GM12878 (cell line): ENCODE measurements at regions of chr9 and their contacts with region 1.

Region 1: DNA sequence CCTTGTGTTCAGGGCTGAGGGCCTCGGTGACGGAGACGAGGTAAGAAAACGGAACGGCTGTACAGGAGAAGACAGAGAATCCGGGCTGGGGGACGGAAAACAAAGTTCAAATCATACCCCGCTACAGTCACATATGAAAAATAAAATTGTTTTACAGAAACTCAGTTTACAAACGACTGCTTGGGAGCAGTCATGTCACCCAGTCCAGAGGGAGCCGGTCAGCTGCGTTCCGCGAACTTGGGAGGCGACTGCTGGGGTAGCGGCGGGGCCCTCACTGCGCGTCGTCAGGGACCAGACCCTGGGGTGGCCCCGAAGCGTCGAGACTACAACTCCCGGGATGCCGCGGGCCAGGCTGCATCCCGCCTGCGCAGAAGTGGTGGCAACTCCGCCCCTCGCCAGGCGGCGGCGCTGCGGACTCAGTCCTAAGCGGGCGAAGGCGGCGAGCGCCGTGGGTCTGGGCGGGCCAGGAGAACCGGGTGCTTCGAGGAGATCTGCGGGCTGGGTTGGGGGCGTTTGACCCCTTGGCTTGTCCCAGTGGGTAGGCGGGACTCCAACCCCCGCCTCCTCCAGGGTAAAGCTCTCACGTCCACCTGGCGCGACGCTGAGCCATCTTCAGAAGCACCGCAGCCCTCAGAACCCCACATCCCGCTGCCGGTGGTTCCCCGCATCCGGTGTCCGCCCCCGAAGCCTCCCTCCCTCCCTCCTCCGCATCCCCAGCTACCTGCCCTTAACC is 4.0 kb downstream of the SIT1 start:
- DNase-seq: no peak
- ATAC-seq: peak; percentile 90
- H3K4me3 ChIP-seq: peak overlapping the region; percentile 96
- H3K27ac ChIP-seq: peak overlapping the region; percentile 89
- H3K4me1 ChIP-seq: peaks cover 27% of the 10 kb centered on the region
- H3K27me3 ChIP-seq: no peaks in the 10 kb centered on the region
- CTCF ChIP-seq: peak; percentile 98
- EP300 ChIP-seq: no peak
- POLR2A ChIP-seq: peak; percentile 74
- RAD21 ChIP-seq: peak; percentile 79

Region 2: DNA sequence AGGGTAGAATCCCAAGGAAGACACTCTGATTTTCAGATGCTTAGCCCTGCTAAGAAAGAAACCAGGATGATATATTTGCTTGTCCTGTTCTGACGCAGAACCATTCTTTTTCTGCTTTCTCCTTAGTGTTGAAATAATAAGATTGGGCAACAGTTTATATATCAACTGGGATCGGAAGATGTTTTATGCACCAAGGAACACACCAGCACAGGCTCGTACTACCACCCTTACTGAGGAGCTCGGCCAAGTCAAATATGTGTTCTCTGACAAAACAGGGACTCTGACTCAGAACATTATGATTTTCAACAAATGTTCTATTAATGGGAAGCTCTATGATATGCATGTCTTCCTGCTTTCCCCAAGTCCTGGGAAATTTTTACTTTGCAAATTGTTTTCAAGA is 175.8 kb before region 1 on chr9:
- CTCF ChIA-PET with region 1: no interaction called
- POLR2A ChIA-PET with region 1: no interaction called
- RAD21 ChIA-PET with region 1: no interaction called
- SMC1A ChIA-PET with region 1: no interaction called
- in situ Hi-C with region 1: no loop called
- intact Hi-C with region 1: no loop called
- DNase-seq: no peak
- ATAC-seq: no peak
- H3K4me3 ChIP-seq: no peak overlapping the region
- H3K27ac ChIP-seq: no peak overlapping the region
- H3K4me1 ChIP-seq: no peaks in the 10 kb centered on the region
- H3K27me3 ChIP-seq: no peaks in the 10 kb centered on the region
- CTCF ChIP-seq: no peak
- EP300 ChIP-seq: no peak
- POLR2A ChIP-seq: no peak
- RAD21 ChIP-seq: no peak

Region 3: DNA sequence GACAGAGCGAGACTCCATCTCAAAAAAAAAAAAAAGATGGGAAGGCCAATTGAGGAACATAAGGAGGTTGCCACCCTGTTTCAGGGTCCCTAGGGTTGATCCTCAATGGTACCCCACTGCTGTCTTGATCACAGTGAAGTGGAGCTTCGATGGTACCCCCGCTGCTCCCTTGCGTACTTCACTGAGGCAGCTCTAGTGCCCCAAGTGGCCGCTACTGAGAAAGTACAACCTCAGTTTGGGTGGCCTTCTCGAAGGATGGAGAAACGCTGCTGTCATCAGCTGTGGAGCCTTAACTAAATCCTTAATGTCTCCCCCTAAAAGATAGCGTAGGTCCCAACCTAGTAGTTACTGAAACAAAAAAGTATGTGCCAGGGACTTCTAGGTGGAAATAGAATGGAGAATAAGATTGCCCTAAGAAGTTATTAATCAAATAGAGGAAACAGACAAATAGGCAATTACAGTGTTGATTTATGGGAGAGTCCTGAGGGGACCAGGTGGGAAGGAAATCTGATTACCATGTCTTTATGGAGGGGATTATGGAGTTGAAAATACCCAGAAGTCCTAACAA is 35.4 kb before region 1 on chr9:
- CTCF ChIA-PET with region 1: interaction called, 101 read pairs
- POLR2A ChIA-PET with region 1: interaction called, 8 read pairs
- RAD21 ChIA-PET with region 1: interaction called, 57 read pairs
- SMC1A ChIA-PET with region 1: interaction called, 34 read pairs
- in situ Hi-C with region 1: no loop called
- intact Hi-C with region 1: no loop called
- DNase-seq: no peak
- ATAC-seq: peak; percentile 93
- H3K4me3 ChIP-seq: no peak overlapping the region
- H3K27ac ChIP-seq: no peak overlapping the region
- H3K4me1 ChIP-seq: peaks cover under 1% of the 10 kb centered on the region; the same call in 1 of the 2 replicates
- H3K27me3 ChIP-seq: no peaks in the 10 kb centered on the region
- CTCF ChIP-seq: peak; percentile 73 to 80 (median 77)
- EP300 ChIP-seq: no peak
- POLR2A ChIP-seq: no peak
- RAD21 ChIP-seq: peak; percentile 39

Region 4: GRCh38 chr9:35628389-35628991 is 18.2 kb before region 1 on chr9:
- CTCF ChIA-PET with region 1: interaction called, 8 read pairs
- POLR2A ChIA-PET with region 1: interaction called, 10 read pairs
- RAD21 ChIA-PET with region 1: interaction called, 6 read pairs
- SMC1A ChIA-PET with region 1: interaction called, 32 read pairs
- in situ Hi-C with region 1: no loop called
- intact Hi-C with region 1: no loop called
- DNase-seq: no peak
- ATAC-seq: no peak
- H3K4me3 ChIP-seq: no peak overlapping the region
- H3K27ac ChIP-seq: no peak overlapping the region
- H3K4me1 ChIP-seq: peaks cover 13% of the 10 kb centered on the region
- H3K27me3 ChIP-seq: no peaks in the 10 kb centered on the region
- CTCF ChIP-seq: no peak
- EP300 ChIP-seq: no peak
- POLR2A ChIP-seq: no peak
- RAD21 ChIP-seq: no peak

Region 5: DNA sequence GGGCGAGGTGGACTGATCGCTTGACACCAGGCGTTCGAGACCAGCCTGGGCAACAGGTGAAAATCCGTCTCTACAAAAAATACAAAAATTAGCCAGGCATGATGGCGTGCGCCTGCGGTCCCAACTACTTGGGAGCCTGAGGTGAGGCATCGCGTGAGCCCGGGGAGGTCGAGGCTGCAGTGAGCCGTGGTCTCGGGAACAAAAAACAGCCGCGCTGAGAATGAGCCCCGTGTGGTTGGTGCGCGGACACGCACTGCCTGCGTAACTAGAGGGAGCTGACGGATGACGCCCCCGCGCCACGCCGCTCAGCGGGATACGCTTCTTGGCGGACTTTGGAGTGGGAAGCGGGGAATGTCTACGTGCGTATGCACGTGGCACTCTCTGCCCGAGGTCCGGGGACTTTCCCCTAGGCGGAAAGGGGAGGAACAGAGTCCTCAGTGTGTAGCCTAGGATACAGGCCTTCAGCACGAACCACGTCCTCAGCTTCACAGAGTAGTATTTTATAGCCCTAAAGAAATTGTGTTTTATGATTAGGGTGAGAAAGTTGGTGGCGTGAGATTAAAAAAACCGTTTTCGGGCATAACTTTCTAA is 10.9 kb after region 1 on chr9 and contains the start of gene RMRP:
- CTCF ChIA-PET with region 1: interaction called, 116 read pairs
- POLR2A ChIA-PET with region 1: interaction called, 163 read pairs
- RAD21 ChIA-PET with region 1: interaction called, 95 read pairs
- SMC1A ChIA-PET with region 1: interaction called, 114 read pairs
- in situ Hi-C with region 1: no loop called
- intact Hi-C with region 1: loop called (anchors 1 kb)
- DNase-seq: peak; percentile 96
- ATAC-seq: peak; percentile 93
- H3K4me3 ChIP-seq: peak within 1 kb of the TSS; percentile 85
- H3K27ac ChIP-seq: peak within 1 kb of the TSS; percentile 90
- H3K4me1 ChIP-seq: peaks cover 22% of the 10 kb centered on the region
- H3K27me3 ChIP-seq: no peaks in the 10 kb centered on the region
- CTCF ChIP-seq: no peak
- EP300 ChIP-seq: peak in 1 of 2 experiments; percentile 63; a peak in 3 of 4 replicates
- POLR2A ChIP-seq: no peak
- RAD21 ChIP-seq: no peak
- polyA plus RNA-seq, gene RMRP: not detected

Region 6: DNA sequence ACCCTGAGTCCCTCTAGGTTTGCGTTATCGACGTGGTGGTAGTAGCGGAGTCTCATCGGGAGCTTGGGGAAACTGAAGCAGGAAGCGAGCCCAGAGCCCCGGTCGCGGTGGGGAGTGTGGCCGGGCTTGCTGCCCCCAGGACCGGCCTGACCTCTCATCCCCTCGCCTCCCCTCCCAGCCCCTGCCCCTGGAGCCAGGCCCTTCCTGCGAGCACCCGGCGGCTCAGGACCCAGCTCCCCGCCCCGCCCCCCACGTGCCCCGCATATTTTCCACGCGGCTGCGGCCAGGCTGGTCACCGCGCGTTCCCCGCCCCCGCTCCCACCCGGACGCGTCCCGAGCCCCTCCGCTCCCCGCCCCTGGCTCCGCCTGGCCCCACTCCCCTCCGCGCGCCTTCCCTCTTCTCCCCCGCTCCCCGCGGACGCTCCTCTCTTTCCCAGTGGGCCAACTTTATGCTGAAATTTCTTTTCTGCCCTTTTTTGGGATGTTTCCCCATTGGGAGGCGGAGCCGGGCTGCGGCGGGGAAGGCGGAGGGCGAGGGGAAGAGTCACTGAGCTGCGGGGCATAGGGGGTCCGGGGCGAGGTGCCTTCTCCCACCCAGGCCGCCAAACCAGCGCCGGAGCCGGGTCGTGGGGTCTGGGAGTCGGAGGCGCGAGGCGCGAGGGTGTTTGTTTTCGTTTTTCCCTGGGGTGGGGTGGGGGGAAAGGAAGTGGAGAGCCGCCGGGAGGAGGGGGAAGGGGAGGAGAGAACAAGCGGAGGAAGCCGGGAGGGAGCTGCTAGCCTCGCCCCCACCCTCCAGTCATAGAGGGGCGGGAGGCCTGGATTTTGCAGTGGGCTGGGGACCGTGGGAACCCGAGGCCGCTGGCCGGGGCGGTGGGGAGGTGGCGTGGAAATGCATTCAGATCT is 44.0 kb after region 1 on chr9:
- CTCF ChIA-PET with region 1: interaction called, 57 read pairs
- POLR2A ChIA-PET with region 1: interaction called, 6 read pairs
- RAD21 ChIA-PET with region 1: interaction called, 7 read pairs
- SMC1A ChIA-PET with region 1: interaction called, 50 read pairs
- in situ Hi-C with region 1: no loop called
- intact Hi-C with region 1: no loop called
- DNase-seq: no peak
- ATAC-seq: peak; percentile 54
- H3K4me3 ChIP-seq: peak overlapping the region; percentile 87
- H3K27ac ChIP-seq: no peak overlapping the region
- H3K4me1 ChIP-seq: peaks cover 3% of the 10 kb centered on the region; the same call in 1 of the 2 replicates
- H3K27me3 ChIP-seq: no peaks in the 10 kb centered on the region
- CTCF ChIP-seq: no peak
- EP300 ChIP-seq: no peak
- POLR2A ChIP-seq: no peak; the same call in 1 of the 2 replicates
- RAD21 ChIP-seq: no peak

Region 7: DNA sequence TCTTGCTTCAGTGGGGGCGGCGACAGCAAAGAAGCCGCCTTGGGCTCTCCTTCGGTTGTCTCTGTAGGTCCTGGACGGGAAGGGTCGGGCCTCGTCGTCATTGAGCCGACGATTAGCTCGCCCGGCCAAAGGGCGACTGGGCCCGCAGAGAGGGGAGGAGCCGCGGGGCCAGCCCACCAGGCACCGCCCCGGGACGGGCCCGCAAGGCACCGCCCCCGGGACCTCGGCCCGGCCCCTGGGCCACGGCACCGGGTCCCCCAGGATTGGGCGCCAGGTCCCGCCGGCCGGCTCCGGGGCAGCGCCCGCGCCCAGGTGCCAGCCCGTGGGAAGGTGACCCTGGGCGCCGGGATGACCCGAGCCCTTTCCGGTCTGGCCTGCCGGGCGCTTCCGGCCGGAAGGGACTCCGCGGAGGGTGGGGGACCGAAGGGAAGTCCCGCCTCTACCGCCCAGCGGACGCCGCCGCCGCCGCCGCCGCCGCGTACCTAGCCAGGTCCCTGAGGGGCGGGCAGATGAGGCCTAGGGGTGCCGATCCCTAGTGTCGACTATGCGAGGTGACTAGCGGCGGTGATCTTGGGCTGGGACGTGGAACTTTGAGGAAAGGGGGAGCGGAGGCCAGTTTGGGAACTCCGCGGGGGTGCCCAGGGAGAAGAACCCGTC is 102.3 kb after region 1 on chr9 and contains the starts of genes GBA2 and RGP1:
- CTCF ChIA-PET with region 1: interaction called, 8 read pairs
- POLR2A ChIA-PET with region 1: interaction called, 12 read pairs
- RAD21 ChIA-PET with region 1: interaction called, 4 read pairs
- SMC1A ChIA-PET with region 1: interaction called, 5 read pairs
- in situ Hi-C with region 1: no loop called
- intact Hi-C with region 1: no loop called
- DNase-seq: no peak
- ATAC-seq: peak; percentile 93
- H3K4me3 ChIP-seq: peak within 1 kb of the TSS; percentile 99
- H3K27ac ChIP-seq: peak within 1 kb of the TSS; percentile 75
- H3K4me1 ChIP-seq: peaks cover 4% of the 10 kb centered on the region
- H3K27me3 ChIP-seq: no peaks in the 10 kb centered on the region
- CTCF ChIP-seq: no peak
- EP300 ChIP-seq: no peak
- POLR2A ChIP-seq: peak; percentile 76
- RAD21 ChIP-seq: no peak
- polyA plus RNA-seq, gene GBA2: 15.3 TPM
- polyA plus RNA-seq, gene RGP1: 0.44 to 0.89 TPM

Region 8: DNA sequence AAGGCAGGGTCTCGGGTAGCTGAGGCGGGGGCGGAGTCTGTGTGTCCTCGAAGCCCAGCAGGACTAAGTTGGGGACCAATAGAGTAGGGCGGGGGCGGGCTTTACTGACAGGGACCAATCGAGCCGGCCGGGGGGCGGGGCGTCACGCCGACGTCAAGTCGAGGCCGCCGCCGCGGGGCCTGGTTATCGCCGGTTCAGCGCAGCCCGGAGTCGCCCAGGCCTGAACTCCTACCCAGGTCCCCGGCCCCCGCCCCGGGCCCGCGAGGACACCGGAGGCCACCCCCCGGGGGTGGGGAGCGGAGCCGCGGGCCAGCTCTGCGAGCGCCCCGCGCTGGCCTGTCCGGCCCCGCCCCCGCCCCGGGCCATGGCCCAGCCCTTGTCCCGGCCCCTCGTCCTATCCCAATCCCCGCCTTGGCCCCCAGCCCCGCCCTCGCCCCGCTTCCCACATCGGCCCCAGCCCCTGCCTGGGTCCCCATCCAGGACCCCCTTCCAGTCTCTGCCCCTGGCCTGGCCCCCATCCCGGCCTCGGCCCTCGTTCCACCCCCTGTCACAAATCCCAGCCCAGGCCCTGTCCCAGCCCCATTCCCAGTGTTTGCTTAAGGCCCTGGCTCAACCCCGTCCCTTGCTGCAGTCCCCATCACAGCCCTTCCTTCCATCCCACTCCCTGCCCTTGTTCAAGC is 182.5 kb after region 1 on chr9 and contains the start of gene TMEM8B:
- CTCF ChIA-PET with region 1: interaction called, 12 read pairs
- POLR2A ChIA-PET with region 1: no interaction called
- RAD21 ChIA-PET with region 1: interaction called, 11 read pairs
- SMC1A ChIA-PET with region 1: interaction called, 14 read pairs
- in situ Hi-C with region 1: no loop called
- intact Hi-C with region 1: loop called (anchors 10 kb)
- DNase-seq: no peak
- ATAC-seq: peak; percentile 90
- H3K4me3 ChIP-seq: peak within 1 kb of the TSS; percentile 78
- H3K27ac ChIP-seq: peak within 1 kb of the TSS; percentile 45; the same call in 1 of the 2 replicates
- H3K4me1 ChIP-seq: peaks cover 15% of the 10 kb centered on the region
- H3K27me3 ChIP-seq: no peaks in the 10 kb centered on the region
- CTCF ChIP-seq: no peak
- EP300 ChIP-seq: no peak
- POLR2A ChIP-seq: peak; percentile 76
- RAD21 ChIP-seq: no peak
- polyA plus RNA-seq, gene TMEM8B: 0.19 to 0.71 TPM